Lower leg skin (tissue), 4 donors: ENCODE measurements at regions of chr2 and their contacts with region 1.

Region 1: DNA sequence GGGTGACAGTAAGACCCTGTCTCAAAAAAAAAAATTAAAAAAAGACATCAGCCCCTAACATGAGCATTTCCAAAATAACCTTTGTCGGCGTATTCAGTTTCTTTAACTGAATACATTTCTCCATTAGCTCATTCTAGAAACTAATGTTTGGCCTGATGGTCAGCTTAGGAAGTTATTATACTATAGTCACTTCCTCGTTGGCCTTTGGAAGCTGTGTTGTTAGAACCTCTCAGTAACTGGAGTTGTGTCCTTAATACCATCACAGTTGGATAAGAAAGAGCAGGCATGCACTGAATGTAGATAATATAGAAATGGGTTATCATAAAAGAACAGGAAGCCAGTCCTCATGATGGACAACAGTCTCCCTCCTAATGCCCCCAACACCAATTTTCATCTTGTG is 112.8 kb downstream of the ANTXR1 start:
- DNase-seq: no peak
- H3K4me3 ChIP-seq: no peak overlapping the region
- CTCF ChIP-seq: no peak
- POLR2A ChIP-seq: no peak

Region 2: DNA sequence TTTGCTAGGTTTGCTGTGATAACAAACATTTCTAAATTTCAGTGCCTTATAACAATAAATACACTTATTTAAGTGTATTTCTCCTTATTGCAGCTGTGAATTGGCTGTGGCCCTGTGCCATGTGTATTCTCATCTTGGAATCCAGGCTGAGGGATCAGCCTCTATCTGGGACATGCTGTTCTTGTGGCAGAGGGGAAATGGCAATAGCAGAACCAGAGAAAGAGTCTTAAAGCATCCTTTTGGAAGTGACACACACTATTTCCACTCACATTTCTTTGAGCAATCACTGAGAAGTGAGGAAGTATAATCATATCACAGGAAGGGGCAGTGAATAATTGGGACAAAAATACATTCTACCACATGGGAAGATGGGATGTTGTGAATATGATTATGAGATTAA is 548.6 kb before region 1 on chr2:
- intact Hi-C with region 1: no loop called
- DNase-seq: no peak
- H3K4me3 ChIP-seq: no peak overlapping the region
- CTCF ChIP-seq: no peak
- POLR2A ChIP-seq: no peak

Region 3: DNA sequence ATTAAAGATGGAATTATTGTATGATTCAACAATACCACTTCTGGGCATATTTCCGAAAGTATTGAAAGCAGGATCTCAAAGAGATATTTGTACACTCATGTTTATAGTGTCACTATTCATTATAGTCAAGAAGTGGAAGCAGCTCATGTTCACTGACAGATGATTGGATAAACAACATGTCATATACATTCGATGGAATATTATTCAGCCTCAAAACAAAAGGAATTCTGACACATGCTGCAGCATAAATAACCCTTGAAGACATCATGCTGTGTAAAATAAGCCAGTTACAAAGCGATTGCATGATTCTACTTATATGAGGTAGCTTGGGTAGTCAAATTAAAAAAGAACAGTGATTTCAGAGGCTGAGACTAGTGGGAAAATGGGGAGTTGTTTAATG is 521.7 kb before region 1 on chr2:
- intact Hi-C with region 1: loop called (anchors 5 kb)
- DNase-seq: no peak
- H3K4me3 ChIP-seq: no peak overlapping the region
- CTCF ChIP-seq: no peak
- POLR2A ChIP-seq: no peak

Region 4: DNA sequence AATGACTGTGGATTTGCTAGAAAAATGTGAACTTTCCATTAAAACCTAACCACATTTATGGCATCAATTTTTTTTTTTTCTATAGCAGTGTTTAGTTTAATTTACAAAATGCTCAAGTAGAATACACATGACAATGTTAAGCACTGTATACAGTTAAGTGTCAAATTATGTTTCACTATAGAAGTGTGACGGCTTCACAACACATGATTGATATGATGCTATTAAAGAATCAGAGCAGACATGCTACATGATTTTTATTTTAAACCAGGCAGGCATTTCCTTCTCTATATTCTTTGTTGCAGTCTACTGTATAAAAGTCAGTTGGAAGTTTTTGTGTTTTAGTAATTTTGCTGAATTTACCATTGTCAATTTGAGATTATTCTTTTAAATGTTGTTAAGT is 438.8 kb before region 1 on chr2:
- intact Hi-C with region 1: no loop called
- DNase-seq: no peak
- H3K4me3 ChIP-seq: no peak overlapping the region
- CTCF ChIP-seq: no peak
- POLR2A ChIP-seq: no peak

Region 5: GRCh38 chr2:69082430-69082997 is 43.3 kb before region 1 on chr2:
- intact Hi-C with region 1: no loop called
- DNase-seq: peak; percentile 58 to 90
- H3K4me3 ChIP-seq: no peak overlapping the region
- CTCF ChIP-seq: no peak
- POLR2A ChIP-seq: no peak

Region 6: GRCh38 chr2:69100220-69100723 is 25.5 kb before region 1 on chr2:
- intact Hi-C with region 1: no loop called
- DNase-seq: peak in 1 of 2 donors; percentile 85
- H3K4me3 ChIP-seq: no peak overlapping the region
- CTCF ChIP-seq: no peak
- POLR2A ChIP-seq: no peak